AG04449 (cell line): ENCODE measurements at regions of chr1 and their contacts with region 1.

Region 1: DNA sequence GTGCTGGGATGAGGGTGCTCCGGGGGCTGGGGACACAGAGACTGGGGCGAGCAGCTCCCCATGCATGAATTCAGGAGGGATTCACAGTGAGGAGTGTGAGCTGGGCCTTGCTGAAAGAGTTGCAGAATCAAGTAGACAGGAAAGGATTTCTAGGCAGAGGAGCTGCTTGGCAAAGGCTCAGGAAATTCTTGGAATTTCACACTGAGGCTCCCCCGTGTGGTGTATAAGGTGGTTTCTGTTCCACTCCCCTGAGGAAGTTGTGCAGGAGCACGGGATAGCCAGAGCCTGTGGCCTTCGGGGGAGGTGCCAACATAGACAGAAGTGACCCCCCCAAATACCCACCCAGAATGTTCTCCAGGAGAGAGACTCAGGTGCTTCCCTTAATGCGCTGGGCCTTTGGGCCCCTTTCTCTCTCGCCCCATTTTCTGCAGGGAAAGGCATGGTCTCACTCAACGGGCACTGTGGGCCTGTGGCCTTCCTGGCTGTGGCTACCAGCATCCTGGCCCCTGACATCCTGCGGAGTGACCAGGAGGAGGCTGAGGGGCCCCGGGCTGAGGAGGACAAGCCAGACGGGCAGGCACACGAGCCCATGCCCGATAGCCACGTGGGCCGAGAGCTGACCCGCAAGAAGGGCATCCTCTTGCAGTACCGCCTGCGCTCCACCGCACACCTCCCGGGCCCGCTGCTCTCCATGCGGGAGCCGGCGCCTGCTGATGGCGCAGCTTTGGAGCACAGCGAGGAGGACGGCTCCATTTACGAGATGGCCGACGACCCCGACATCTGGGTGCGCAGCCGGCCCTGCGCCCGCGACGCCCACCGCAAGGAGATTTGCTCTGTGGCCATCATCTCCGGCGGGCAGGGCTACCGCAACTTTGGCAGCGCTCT is 58.5 kb upstream of the ACTL8 start:
- DNase-seq: peak; percentile 38
- H3K4me3 ChIP-seq: no peak overlapping the region
- CTCF ChIP-seq: peak; percentile 63

Region 2: DNA sequence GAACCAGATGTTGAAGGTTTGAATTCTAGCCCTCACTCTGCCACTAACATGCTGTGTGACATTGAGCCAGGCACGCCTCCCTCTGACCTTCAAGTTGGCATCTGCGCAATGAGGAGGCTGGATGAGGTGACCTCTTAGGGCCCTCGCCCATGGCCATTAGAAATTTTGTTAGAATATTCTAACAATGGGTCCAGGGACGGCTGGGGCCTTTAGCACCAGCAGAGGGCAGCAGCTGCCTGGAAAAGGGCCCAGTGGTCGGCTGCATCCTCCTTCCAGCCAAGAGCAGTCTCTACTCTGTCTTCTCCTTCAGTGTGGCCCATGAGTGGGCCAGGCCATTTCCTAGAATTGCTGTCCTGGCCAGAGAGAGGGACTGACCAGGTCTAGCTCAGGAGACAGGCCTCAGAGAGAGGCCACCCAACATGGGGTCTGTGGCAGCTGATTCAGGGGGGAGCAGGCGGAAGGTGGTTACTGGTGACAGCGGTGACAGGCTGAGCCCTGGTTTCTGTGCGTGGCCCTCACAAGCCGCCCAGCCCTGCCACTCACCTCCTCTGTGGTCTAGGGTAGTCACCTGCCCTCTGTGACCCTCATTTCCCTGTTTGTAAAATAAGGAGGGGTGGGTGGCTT is 42.8 kb before region 1 on chr1:
- CTCF ChIA-PET with region 1: interaction called, 11 read pairs
- POLR2A ChIA-PET with region 1: no interaction called
- DNase-seq: no peak
- H3K4me3 ChIP-seq: no peak overlapping the region
- CTCF ChIP-seq: peak; percentile 89

Region 3: DNA sequence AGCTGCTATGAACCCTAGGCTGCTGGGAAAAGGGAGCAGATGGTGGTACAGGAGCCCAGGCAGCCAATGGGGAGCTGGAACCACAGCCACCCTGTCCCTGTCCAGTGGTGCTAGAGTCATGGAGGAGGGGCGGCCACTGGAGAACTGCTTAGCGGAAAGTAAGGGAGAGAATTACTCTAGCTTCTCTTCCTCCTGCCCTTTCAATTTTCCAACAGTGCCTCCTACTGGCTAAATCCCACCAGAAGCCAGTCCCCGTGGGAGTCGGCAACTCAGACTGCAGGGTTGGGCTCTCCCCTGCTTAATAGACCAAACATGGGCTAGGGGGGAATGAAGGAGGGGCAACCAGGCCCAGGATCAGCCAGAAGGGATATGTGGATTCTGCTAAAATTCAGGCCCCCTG is 213.0 kb after region 1 on chr1:
- CTCF ChIA-PET with region 1: interaction called, 13 read pairs
- POLR2A ChIA-PET with region 1: no interaction called
- DNase-seq: no peak
- H3K4me3 ChIP-seq: no peak overlapping the region
- CTCF ChIP-seq: peak; percentile 17